Panc1 (cell line): ENCODE measurements at regions of chr19 and their contacts with region 1.

Region 1: DNA sequence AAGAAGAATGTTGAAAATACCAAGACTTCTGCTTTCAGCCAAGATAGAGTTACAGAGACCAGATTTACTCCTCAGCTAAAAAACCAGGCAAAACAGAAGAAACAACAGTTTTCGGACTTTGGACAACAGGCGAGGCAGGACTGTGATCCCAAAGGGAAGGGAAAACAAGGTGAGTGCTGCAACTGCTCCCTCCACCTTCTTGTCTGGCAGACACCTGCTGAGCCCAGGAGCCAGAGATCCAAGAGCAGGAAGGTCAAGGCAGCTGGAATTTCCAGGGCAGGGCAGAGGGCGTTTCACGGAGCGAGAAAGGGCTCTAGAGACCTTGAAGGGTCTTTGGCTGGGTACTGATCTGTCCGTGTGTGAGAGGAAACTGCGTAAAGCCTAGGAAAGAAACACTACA is 32.9 kb upstream of the SLC7A9 start:
- DNase-seq: no peak
- ATAC-seq: no peak
- H3K4me3 ChIP-seq: no peak overlapping the region
- H3K27ac ChIP-seq: no peak overlapping the region
- H3K4me1 ChIP-seq: no peaks in the 10 kb centered on the region
- H3K27me3 ChIP-seq: no peaks in the 10 kb centered on the region
- CTCF ChIP-seq: no peak

Region 2: GRCh38 chr19:32886241-32886762 is 16.1 kb before region 1 on chr19:
- CTCF ChIA-PET with region 1: no interaction called
- POLR2A ChIA-PET with region 1: no interaction called
- in situ Hi-C with region 1: no loop called
- intact Hi-C with region 1: no loop called
- DNase-seq: no peak
- ATAC-seq: no peak
- H3K4me3 ChIP-seq: no peak overlapping the region
- H3K27ac ChIP-seq: no peak overlapping the region
- H3K4me1 ChIP-seq: no peaks in the 10 kb centered on the region
- H3K27me3 ChIP-seq: no peaks in the 10 kb centered on the region
- CTCF ChIP-seq: no peak

Region 3: DNA sequence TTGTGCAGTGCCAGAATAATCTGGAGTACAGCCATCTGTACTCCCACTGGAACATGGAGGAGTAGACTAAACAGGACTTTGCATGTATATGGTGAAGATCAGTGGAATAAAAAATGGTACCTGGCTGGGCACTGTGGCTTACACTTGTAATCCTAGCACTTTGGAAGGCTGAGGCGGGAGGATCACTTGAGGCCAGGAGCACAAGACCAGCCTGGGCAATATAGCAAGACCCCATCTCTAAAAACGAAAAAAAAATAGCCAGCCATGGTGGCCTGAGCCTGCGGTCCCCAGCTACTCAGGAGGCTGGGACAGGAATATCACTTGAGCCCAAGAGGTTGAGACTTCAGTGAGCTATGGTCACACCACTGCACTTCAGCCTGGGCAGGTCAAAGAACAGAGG is 1545.7 kb after region 1 on chr19:
- CTCF ChIA-PET with region 1: no interaction called
- POLR2A ChIA-PET with region 1: interaction called, 11 read pairs
- in situ Hi-C with region 1: no loop called
- intact Hi-C with region 1: no loop called
- DNase-seq: no peak
- ATAC-seq: no peak
- H3K4me3 ChIP-seq: no peak overlapping the region
- H3K27ac ChIP-seq: no peak overlapping the region
- H3K4me1 ChIP-seq: no peaks in the 10 kb centered on the region
- H3K27me3 ChIP-seq: no peaks in the 10 kb centered on the region
- CTCF ChIP-seq: no peak